ENCODE measurements at regions of chr1 and their contacts with region 1.

Region 1: DNA sequence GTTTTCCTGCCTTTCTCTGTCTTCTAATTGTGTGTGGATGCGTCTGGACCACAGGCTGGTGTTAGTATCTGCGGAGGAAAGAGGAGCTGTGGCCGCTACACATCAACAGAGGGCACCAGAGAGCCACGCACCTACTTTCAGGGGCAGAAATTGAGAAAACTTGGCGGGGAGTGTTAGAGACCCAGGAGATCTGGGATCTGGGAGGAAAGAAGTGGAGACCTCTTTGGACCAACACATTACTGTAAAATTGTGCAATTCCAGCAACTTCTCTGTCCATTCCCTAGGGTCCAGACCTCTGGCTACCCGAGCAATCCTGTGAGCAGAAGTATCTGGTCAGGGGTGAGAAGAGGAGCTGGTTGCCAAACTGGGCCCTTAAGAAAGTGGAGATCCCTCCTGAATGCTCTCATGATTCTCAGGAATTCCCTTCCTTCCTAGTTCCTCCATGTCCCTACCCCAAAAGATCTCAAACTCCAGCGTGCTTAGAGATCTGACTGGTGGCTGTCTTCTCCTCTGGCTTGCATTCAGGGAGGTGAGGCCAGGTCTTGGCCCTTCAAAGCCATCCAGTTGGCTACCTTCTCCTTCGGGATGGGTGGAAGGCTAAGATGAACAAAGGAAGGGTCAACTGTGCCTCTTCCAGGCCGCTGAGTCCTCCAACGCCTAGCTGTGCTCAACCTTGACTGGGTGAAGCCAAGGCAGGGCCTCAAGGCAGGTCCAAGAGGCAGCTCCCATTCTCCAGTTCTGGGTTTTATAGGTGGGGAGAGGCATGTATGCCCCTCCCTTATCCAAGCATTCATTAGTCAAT is 1.2 kb upstream of the KIRREL1 start:
- DNase-seq: no peak
- H3K4me3 ChIP-seq: no peak overlapping the region
- CTCF ChIP-seq: peak; percentile 95

Region 2: DNA sequence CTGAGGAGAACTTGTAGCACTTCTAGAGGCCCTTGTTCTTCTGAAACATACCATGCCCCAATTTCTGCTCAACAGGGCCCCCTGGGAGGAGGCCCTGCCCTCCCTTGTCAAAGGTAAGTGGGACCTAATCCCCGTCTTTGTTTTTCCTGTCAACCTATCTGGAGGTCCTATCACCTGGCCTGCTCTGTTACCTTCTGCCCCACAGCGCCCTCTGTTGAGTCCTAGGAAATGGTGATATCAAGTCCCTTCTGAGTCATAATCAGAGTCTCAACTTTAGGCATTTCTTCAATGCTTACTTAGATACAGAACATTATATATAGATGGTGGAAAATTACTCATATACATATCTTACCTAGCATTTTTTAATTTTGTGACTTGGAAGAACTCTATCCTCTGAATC is 366.1 kb before region 1 on chr1:
- CTCF ChIA-PET with region 1: no interaction called
- POLR2A ChIA-PET with region 1: no interaction called
- DNase-seq: no peak
- H3K4me3 ChIP-seq: no peak overlapping the region
- CTCF ChIP-seq: no peak

Region 3: GRCh38 chr1:157969697-157970485 is 22.3 kb before region 1 on chr1:
- CTCF ChIA-PET with region 1: interaction called, 401 read pairs
- POLR2A ChIA-PET with region 1: interaction called, 8 read pairs
- DNase-seq: no peak
- H3K4me3 ChIP-seq: no peak overlapping the region
- CTCF ChIP-seq: peak; percentile 86

Region 4: GRCh38 chr1:158028969-158029368 is 36.7 kb after region 1 on chr1:
- CTCF ChIA-PET with region 1: interaction called, 359 read pairs
- POLR2A ChIA-PET with region 1: interaction called, 3 read pairs
- DNase-seq: no peak
- H3K4me3 ChIP-seq: no peak overlapping the region
- CTCF ChIP-seq: no peak

Region 5: GRCh38 chr1:158067662-158068061 is 75.4 kb after region 1 on chr1:
- CTCF ChIA-PET with region 1: interaction called, 108 read pairs
- POLR2A ChIA-PET with region 1: interaction called, 3 read pairs
- DNase-seq: no peak
- H3K4me3 ChIP-seq: no peak overlapping the region
- CTCF ChIP-seq: no peak

Region 6: DNA sequence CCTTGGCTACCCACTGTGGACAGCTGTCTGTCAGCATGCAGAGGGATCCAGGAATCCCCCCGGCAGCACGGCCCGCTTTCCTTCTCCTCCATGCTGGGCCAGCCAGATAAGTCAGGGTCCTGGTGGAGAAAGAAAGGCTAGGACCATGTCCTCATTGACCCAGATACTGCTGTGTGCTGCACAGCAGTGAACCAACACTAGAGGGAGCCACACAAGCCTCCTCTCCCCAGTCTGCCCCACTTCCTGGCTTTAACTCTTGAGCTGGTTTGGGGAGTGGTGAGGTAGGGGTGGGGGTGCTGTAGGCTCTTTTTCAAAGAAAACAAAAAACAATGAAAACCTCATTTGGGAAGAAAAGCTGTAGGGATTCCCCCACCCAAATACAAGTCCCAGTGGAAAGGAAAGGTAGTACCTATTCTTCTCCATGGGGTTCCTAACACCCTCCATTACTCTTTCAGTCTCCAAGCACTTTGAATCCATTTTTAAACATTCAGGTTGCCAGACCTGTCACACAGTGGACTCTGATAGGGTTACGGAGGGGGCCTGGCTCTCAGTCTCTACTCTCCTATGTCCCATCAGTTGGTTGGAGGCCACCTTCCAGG is 103.6 kb after region 1 on chr1:
- CTCF ChIA-PET with region 1: interaction called, 208 read pairs
- POLR2A ChIA-PET with region 1: no interaction called
- DNase-seq: no peak
- H3K4me3 ChIP-seq: no peak overlapping the region
- CTCF ChIP-seq: peak; percentile 80

Region 7: GRCh38 chr1:158163000-158163947 is 171.0 kb after region 1 on chr1:
- CTCF ChIA-PET with region 1: no interaction called
- POLR2A ChIA-PET with region 1: no interaction called
- DNase-seq: no peak
- H3K4me3 ChIP-seq: no peak overlapping the region
- CTCF ChIP-seq: no peak